Caco-2 (cell line): ENCODE measurements at regions of chr1 and their contacts with region 1.

Region 1: GRCh38 chr1:38026592-38027200 is 14.2 kb downstream of the UTP11 start:
- DNase-seq: peak in 1 of 2 experiments; percentile 54
- H3K4me3 ChIP-seq: no peak overlapping the region
- H3K4me3 Mint-ChIP-seq: no peak overlapping the region
- H3K27ac Mint-ChIP-seq: no peak overlapping the region
- H3K4me1 ChIP-seq: no peaks in the 10 kb centered on the region
- H3K4me1 Mint-ChIP-seq: no peaks in the 10 kb centered on the region
- H3K27me3 ChIP-seq: no peaks in the 10 kb centered on the region
- H3K27me3 Mint-ChIP-seq: no peaks in the 10 kb centered on the region
- CTCF ChIP-seq: peak; percentile 48 to 57

Region 2: DNA sequence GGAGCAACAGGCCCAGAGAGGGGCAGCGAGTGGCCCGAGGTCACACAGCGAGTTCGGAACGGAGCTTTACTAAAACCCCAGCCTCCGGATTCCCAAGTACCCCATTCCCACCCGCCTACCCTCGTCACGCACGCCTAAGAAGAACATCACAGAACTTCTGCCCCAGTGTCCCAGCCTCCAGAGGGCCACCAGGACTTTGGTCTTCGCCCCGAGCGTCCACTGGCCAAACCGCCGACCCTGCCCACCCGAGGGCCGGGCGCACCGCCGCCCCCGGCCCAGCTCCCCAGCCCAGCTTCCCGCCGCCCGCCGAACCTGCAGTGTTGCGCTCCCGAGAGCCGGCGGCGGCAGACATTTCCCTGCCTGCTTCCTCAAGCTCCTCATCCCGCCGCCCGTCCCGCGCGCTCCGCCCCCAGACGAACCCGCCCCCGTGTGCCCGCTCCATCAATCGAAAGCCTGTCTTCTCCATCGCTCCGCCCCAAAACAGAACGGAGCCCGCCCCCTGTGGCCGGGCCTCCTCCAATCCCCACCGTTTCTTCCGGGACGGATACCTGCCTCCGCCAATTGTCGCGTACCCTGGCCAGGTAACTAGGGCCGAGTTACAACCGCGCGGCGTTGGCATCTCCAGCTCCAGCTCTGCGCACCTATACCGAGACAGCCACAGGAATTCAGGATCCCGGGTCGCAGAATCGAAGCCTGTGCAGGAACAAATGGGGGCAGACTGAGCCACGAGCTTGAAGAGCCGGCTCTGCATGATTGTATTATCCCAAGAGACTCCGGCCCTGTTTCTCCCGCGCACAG is 95.1 kb before region 1 on chr1:
- CTCF ChIA-PET with region 1: no interaction called
- POLR2A ChIA-PET with region 1: no interaction called
- intact Hi-C with region 1: no loop called
- DNase-seq: peak; percentile 95 to 96
- H3K4me3 ChIP-seq: peak overlapping the region; percentile 70
- H3K4me3 Mint-ChIP-seq: peak overlapping the region; percentile 86
- H3K27ac Mint-ChIP-seq: peak overlapping the region; percentile 74
- H3K4me1 ChIP-seq: no peaks in the 10 kb centered on the region; the same call in 1 of the 2 replicates
- H3K4me1 Mint-ChIP-seq: no peaks in the 10 kb centered on the region
- H3K27me3 ChIP-seq: no peaks in the 10 kb centered on the region
- H3K27me3 Mint-ChIP-seq: no peaks in the 10 kb centered on the region
- CTCF ChIP-seq: no peak

Region 3: DNA sequence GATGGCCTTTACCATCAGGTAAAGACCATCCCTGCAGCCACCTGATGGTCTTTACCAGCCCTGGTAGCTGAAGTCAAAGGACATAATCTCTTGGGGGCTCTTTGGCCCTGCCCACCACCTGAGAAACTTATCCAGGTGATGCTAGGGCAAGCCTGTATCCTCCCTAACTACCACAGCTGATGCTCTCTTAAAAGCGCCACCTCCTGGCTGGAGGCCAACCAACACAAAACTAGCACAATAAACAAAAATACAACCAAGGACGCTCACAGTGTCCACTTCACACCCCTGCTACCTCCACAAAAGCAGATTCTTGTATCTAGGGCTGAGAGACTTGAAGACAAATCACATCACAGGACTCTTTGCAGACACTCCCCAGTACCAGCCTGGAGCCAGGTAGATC is 377.0 kb after region 1 on chr1:
- CTCF ChIA-PET with region 1: no interaction called
- POLR2A ChIA-PET with region 1: no interaction called
- intact Hi-C with region 1: loop called (anchors 5 kb)
- DNase-seq: peak in 1 of 2 experiments; percentile 0
- H3K4me3 ChIP-seq: no peak overlapping the region
- H3K4me3 Mint-ChIP-seq: no peak overlapping the region
- H3K27ac Mint-ChIP-seq: no peak overlapping the region
- H3K4me1 ChIP-seq: no peaks in the 10 kb centered on the region
- H3K4me1 Mint-ChIP-seq: no peaks in the 10 kb centered on the region
- H3K27me3 ChIP-seq: no peaks in the 10 kb centered on the region
- H3K27me3 Mint-ChIP-seq: peaks cover 7% of the 10 kb centered on the region
- CTCF ChIP-seq: peak in 1 of 2 experiments; percentile 16

Region 4: GRCh38 chr1:38834937-38835827 is 808.5 kb after region 1 on chr1:
- CTCF ChIA-PET with region 1: no interaction called
- POLR2A ChIA-PET with region 1: no interaction called
- intact Hi-C with region 1: loop called (anchors 5 kb)
- DNase-seq: peak; percentile 42 to 67
- H3K4me3 ChIP-seq: no peak overlapping the region
- H3K4me3 Mint-ChIP-seq: no peak overlapping the region
- H3K27ac Mint-ChIP-seq: no peak overlapping the region
- H3K4me1 ChIP-seq: no peaks in the 10 kb centered on the region
- H3K4me1 Mint-ChIP-seq: no peaks in the 10 kb centered on the region
- H3K27me3 ChIP-seq: no peaks in the 10 kb centered on the region
- H3K27me3 Mint-ChIP-seq: peaks cover 5% of the 10 kb centered on the region
- CTCF ChIP-seq: peak; percentile 46 to 56